ENCODE measurements at regions of chr6 and their contacts with region 1.

Region 1: DNA sequence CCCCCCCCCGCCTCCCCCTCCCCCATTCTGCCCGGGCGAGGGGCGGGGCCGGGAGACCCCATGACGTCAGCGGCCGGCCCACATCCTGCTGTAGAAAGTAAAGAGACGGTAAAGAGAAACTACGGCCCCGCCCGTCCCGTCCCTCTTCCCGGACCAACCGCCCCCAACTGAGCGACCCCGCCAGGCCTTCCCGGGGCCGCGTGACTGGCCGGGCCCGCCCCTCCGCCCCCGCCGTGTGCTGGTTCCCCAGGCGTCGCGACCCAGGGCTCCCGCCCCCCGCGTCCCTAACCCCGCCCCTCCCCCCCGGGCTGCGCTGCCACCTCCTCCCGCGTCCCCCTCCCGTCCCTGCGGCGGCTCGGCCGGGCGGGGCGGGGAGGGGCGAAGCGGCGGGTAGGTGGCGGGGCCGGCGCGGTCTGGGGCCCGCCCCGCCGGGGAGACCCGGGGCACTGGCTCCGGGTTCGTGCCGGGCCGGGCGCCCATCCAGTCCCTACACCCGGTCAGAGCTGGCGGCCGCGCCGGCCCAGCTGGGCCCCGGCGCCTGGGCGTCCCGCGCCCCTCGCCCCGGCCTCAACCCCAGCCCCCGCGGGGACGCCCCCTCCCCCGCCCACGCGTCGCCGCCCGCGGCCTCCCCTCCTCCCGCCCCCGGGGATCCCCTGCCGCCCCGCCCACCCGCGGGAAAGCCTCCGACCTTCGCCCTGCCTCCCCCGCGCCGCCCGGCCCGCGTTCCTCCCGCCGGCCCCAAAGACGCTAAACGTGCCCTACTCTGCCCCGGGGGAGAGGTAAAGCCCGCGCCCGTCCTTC is 636 bp upstream of the HIVEP1 start:
- DNase-seq: peak; percentile 92
- ATAC-seq: peak; percentile 72
- H3K4me3 Mint-ChIP-seq: peak overlapping the region; percentile 92
- H3K27ac Mint-ChIP-seq: peak overlapping the region; percentile 95
- H3K4me1 Mint-ChIP-seq: peaks cover 50% of the 10 kb centered on the region
- H3K27me3 Mint-ChIP-seq: no peaks in the 10 kb centered on the region
- CTCF ChIP-seq: no peak

Region 2: DNA sequence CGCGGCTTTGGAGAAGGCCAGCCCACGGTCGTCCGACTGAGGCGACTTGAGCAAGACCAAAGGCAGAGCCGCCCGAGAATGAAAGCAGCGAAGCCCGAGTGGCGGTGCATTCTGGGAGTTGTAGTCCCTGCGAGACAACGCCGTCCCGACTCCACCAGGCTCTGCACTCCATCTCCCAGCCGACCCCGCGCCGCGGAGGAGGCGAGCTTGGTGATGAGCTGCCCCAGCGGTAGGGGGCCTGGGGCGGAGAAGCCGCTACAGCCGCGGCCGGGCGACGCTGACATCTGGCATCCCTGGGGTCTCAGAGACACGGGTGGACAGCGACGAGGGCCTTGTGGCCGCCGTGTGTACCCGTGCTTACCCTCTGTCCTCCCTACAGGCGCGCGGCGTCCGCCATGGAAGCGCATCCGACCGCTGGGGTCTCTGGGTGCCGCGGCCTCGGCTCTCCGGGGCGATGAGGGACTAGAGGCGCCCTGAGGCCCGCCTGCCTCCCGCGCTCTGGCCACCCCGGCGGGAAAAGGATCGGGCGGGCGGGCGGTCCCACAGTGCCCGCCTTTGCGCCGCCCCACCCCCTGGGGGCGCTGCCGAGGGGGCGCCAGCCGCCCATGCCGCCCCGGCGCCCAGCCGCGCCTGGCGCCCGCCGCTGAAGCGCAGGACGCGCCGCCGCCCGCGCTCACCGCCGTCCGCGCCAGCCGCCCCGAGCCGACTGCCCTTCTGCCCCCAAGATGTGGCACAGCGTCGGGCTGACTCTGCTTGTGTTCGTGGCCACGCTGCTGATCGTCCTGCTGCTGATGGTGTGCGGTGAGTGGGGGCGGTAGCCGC is 917.7 kb before region 1 on chr6 and contains the start of gene SMIM13:
- CTCF ChIA-PET with region 1: no interaction called
- POLR2A ChIA-PET with region 1: no interaction called
- intact Hi-C with region 1: loop called (anchors 5 kb)
- DNase-seq: peak; percentile 90
- ATAC-seq: peak; percentile 90
- H3K4me3 Mint-ChIP-seq: peak within 1 kb of the TSS; percentile 96
- H3K27ac Mint-ChIP-seq: peak within 1 kb of the TSS; percentile 98
- H3K4me1 Mint-ChIP-seq: peaks cover 20% of the 10 kb centered on the region
- H3K27me3 Mint-ChIP-seq: peaks cover 3% of the 10 kb centered on the region
- CTCF ChIP-seq: no peak
- total RNA-seq, gene SMIM13: 5.8 and 5.9 TPM in 2 replicates

Region 3: DNA sequence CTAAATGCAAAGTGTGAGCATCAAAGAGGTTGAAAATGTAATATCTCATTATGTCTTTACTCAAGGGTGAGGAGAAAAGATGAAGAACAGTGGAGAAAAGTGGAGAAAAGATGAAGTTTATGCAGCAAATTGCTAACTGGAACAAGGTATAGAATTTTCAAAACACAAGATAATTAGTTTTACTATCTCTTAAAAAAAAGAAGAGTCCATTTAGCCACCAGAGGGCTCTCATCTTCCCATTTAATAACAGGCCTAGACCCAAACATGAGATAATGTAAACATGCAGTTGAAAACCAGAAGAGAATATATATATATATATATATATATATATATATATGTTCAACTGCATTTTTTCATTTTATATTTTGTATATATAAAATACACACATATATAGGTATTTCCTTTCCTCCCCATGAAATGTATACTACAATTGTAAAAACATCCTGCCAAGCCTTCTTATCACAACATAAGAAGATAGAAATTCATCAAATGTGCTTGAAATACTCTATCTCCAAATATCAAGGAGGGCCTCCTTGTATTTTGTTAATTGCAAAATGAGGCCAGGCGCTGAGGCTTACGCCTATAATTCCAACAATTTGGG is 311.3 kb before region 1 on chr6:
- CTCF ChIA-PET with region 1: no interaction called
- POLR2A ChIA-PET with region 1: no interaction called
- intact Hi-C with region 1: loop called (anchors 1 kb)
- DNase-seq: no peak
- ATAC-seq: no peak
- H3K4me3 Mint-ChIP-seq: no peak overlapping the region
- H3K27ac Mint-ChIP-seq: no peak overlapping the region
- H3K4me1 Mint-ChIP-seq: no peaks in the 10 kb centered on the region
- H3K27me3 Mint-ChIP-seq: no peaks in the 10 kb centered on the region
- CTCF ChIP-seq: no peak

Region 4: DNA sequence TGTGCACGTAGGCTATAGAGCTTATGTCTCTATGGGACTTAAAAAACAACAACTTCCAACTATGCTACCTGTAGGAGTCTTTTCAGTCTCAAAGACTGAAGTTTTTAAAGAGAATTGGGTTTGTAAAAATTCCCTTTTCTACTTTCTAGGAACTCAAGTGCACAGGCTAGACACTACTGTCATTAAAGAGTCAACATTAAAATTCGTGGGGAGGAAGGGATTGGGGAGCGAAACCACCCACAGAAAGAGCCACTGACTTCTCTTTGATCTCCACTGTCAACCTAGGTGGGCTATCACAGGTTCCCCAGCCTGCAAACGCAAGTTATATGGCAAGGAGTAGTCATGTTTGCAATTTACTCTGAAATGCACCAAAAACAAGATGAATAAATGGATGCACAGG is 270.6 kb before region 1 on chr6:
- CTCF ChIA-PET with region 1: no interaction called
- POLR2A ChIA-PET with region 1: no interaction called
- intact Hi-C with region 1: no loop called
- DNase-seq: no peak
- ATAC-seq: no peak
- H3K4me3 Mint-ChIP-seq: no peak overlapping the region
- H3K27ac Mint-ChIP-seq: no peak overlapping the region
- H3K4me1 Mint-ChIP-seq: no peaks in the 10 kb centered on the region
- H3K27me3 Mint-ChIP-seq: peaks cover 13% of the 10 kb centered on the region
- CTCF ChIP-seq: no peak

Region 5: DNA sequence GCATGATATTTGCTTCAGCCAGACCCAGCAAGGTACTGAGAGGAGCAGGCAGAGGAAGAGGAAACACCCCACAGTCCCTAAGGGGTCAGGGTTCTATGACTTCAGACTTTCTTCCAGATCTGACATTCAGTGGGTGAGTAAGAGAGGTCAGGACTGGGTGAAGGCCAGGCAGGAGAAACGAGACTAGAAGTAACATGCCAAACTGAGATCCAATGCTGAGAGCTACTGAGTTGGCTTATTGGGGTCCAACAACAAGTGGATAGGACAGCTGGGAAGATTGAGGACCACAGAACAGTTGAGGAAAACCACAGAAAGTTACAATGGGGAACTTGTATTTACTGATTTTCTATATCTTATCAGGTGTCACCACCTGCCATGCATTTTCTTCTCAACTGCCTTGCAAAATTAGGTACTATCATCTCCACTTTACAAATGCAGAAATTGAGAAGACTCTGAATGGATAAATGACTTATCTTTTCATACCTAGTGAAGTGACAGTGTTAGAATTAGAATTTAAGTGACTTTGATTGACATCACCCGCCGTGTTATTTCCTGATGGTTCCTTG is 43.2 kb before region 1 on chr6:
- CTCF ChIA-PET with region 1: no interaction called
- POLR2A ChIA-PET with region 1: interaction called, 5 read pairs
- intact Hi-C with region 1: loop called (anchors 1 kb)
- DNase-seq: no peak
- ATAC-seq: peak; percentile 99
- H3K4me3 Mint-ChIP-seq: no peak overlapping the region
- H3K27ac Mint-ChIP-seq: peak overlapping the region; percentile 9
- H3K4me1 Mint-ChIP-seq: peaks cover 20% of the 10 kb centered on the region
- H3K27me3 Mint-ChIP-seq: peaks cover 2% of the 10 kb centered on the region
- CTCF ChIP-seq: no peak

Region 6: GRCh38 chr6:12039540-12040459 is 28.3 kb after region 1 on chr6:
- CTCF ChIA-PET with region 1: no interaction called
- POLR2A ChIA-PET with region 1: interaction called, 10 read pairs
- intact Hi-C with region 1: no loop called
- DNase-seq: no peak
- ATAC-seq: no peak
- H3K4me3 Mint-ChIP-seq: no peak overlapping the region
- H3K27ac Mint-ChIP-seq: peak overlapping the region; percentile 73
- H3K4me1 Mint-ChIP-seq: peaks cover 58% of the 10 kb centered on the region
- H3K27me3 Mint-ChIP-seq: no peaks in the 10 kb centered on the region
- CTCF ChIP-seq: no peak

Region 7: GRCh38 chr6:12119085-12119588 is 107.7 kb after region 1 on chr6:
- CTCF ChIA-PET with region 1: no interaction called
- POLR2A ChIA-PET with region 1: interaction called, 19 read pairs
- intact Hi-C with region 1: loop called (anchors 1 kb)
- DNase-seq: no peak
- ATAC-seq: peak; percentile 87
- H3K4me3 Mint-ChIP-seq: peak overlapping the region; percentile 35
- H3K27ac Mint-ChIP-seq: peak overlapping the region; percentile 72
- H3K4me1 Mint-ChIP-seq: peaks cover 53% of the 10 kb centered on the region
- H3K27me3 Mint-ChIP-seq: no peaks in the 10 kb centered on the region
- CTCF ChIP-seq: no peak

Measured in activated B cell treated with CpG ODN at 0.5 μM for 24 hours (primary cell).